IMR-90 (cell line): ENCODE measurements at regions of chr2 and their contacts with region 1.

Region 1: GRCh38 chr2:219388127-219388844 is 574 bp upstream of the DNPEP start:
- DNase-seq: peak; percentile 95
- ATAC-seq: peak; percentile 84
- H3K4me3 ChIP-seq: peak overlapping the region; percentile 26
- H3K27ac ChIP-seq: peak overlapping the region; percentile 68
- H3K4me1 ChIP-seq: peaks cover 23% of the 10 kb centered on the region
- H3K27me3 ChIP-seq: 0 out of 2 replicates have a peak, but pooled peaks cover 2% of the 10 kb centered on the region
- CTCF ChIP-seq: peak; percentile 72
- POLR2A ChIP-seq: no peak
- RAD21 ChIP-seq: peak; percentile 30; the same call in 1 of the 2 replicates

Region 2: DNA sequence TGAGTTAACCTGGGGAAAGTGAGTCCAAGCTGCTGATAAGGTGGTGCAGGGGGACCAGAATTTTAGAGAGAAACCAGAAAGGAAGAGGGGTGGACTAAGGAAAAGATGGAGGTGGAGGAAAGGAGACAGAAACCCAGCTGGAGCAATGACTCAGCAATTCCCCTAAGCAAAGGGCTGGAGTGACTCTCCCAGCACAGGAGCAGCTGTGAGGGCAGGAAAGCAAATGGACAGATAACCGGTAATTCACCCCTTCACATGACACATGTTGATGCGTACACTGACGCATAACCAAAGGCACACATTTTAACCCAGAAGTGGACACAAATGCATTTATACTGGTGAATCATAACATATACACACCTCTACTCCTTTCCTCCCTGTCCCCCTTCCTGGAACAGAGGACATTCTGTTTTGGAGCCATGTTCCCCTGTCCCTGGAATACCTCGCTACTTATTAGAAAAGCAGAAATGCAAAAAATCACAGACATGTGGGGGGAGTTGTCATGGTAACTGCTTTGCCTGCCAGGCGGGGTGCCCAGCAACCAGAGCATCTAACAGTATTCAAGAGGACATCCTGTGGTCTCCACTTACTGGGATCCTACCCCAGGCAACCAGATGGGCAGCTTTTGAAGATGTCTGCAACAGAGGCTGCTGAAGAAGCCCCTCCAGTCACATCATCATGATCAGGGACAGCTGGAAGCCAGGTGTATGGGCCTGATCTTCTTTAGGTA is 424.1 kb before region 1 on chr2:
- CTCF ChIA-PET with region 1: no interaction called
- POLR2A ChIA-PET with region 1: no interaction called
- dilution Hi-C with region 1: no loop called
- in situ Hi-C with region 1: no loop called
- intact Hi-C with region 1: no loop called
- DNase-seq: peak; percentile 92
- ATAC-seq: peak; percentile 18; the same call in 1 of the 2 replicates
- H3K4me3 ChIP-seq: no peak overlapping the region
- H3K27ac ChIP-seq: no peak overlapping the region
- H3K4me1 ChIP-seq: no peaks in the 10 kb centered on the region
- H3K27me3 ChIP-seq: peaks cover 41% of the 10 kb centered on the region
- CTCF ChIP-seq: no peak
- POLR2A ChIP-seq: no peak
- RAD21 ChIP-seq: no peak

Region 3: DNA sequence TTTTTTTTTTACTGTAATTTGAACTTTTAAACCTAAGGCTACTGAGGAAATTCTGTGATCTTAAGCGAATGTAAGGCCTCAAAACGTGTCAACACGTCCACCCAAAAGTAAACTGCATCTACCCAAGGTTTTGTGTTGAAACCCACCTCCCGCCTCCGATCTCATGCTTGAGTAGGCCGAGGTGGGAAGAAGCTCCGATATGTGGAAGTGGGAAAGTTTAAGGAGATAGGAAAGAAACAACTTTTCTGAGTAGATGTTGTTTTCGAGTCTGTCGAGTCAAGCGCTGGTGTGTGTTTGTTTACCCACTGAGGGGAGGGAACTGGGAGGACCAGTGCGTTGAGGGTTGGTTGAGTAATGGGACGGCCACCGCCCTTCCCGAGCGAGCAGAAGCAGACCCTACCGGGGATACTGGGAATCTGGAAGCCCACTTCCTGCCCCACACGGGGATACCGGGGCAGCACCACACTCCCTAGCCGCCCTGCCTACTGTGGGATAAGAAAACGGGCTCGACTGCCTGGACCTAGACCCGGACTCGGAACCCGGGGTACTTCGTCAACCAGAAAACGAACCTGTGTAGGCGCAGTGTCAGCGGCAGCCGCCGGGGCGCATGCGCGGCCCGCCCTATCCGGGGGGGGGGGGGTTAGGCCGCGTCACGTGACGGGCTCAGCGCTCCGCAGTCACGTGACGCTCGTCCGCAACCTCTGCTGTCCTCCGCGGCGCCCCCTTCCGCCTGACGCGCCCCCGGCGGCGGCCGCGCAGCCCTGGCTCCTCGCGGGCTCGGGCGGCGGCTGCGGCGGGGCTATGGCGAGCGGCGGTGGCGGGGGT is 210.5 kb before region 1 on chr2 and contains the start of gene RETREG2:
- CTCF ChIA-PET with region 1: no interaction called
- POLR2A ChIA-PET with region 1: no interaction called
- dilution Hi-C with region 1: no loop called
- in situ Hi-C with region 1: no loop called
- intact Hi-C with region 1: loop called (anchors 5 kb)
- DNase-seq: peak; percentile 89
- ATAC-seq: peak; percentile 73
- H3K4me3 ChIP-seq: peak within 1 kb of the TSS; percentile 64
- H3K27ac ChIP-seq: peak within 1 kb of the TSS; percentile 96
- H3K4me1 ChIP-seq: 0 out of 2 replicates have a peak, but pooled peaks cover 6% of the 10 kb centered on the region
- H3K27me3 ChIP-seq: no peaks in the 10 kb centered on the region
- CTCF ChIP-seq: peak; percentile 56
- POLR2A ChIP-seq: peak; percentile 89
- RAD21 ChIP-seq: 0 out of 2 replicates have a peak, but pooled peaks have one; percentile 4
- total RNA-seq, gene RETREG2: 39.2 and 51.1 TPM in 2 replicates

Region 4: DNA sequence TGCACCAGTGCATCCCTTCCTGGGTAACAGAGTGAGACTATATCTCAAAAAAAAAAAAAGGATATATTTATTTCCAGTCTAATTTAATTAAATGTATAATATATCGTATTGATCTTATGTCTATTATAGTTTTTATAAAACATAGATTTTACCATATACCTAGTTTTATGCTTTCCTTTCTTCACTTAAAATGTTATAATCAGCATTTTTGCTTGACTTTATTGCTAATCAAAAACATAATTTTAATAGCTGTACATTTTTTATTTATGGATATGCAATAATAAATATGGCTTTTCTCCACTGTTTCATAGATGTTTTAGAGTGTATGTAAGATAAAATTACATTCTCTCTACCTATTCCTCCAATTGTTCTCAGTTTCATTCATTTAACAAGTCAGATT is 1225.8 kb after region 1 on chr2:
- CTCF ChIA-PET with region 1: no interaction called
- POLR2A ChIA-PET with region 1: no interaction called
- dilution Hi-C with region 1: no loop called
- in situ Hi-C with region 1: no loop called
- intact Hi-C with region 1: no loop called
- DNase-seq: no peak
- ATAC-seq: no peak
- H3K4me3 ChIP-seq: no peak overlapping the region
- H3K27ac ChIP-seq: no peak overlapping the region
- H3K4me1 ChIP-seq: peaks cover 2% of the 10 kb centered on the region; the same call in 1 of the 2 replicates
- H3K27me3 ChIP-seq: no peaks in the 10 kb centered on the region; the same call in 1 of the 2 replicates
- CTCF ChIP-seq: no peak
- POLR2A ChIP-seq: no peak
- RAD21 ChIP-seq: no peak

Region 5: DNA sequence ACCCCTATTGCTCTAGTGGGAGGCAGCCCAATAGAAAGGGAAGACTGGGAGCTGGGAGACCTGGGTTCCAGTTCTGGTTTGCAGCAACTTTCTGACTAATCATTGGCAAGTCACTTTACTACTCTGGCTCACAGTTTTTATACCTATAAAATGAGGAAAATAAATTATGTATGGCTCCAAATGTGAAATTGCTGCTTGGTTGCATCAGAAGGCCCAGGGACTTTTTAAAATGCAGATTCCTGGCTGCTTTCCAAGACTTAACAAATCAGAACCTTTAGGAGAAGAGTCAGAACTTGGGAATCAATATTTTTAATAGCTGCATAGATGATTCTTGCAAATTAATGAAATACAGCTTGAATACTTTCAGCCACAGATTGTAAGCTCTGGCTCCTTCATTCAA is 1240.0 kb after region 1 on chr2:
- CTCF ChIA-PET with region 1: no interaction called
- POLR2A ChIA-PET with region 1: interaction called, 16 read pairs
- dilution Hi-C with region 1: no loop called
- in situ Hi-C with region 1: no loop called
- intact Hi-C with region 1: no loop called
- DNase-seq: no peak
- ATAC-seq: no peak
- H3K4me3 ChIP-seq: no peak overlapping the region
- H3K27ac ChIP-seq: no peak overlapping the region
- H3K4me1 ChIP-seq: peaks cover 2% of the 10 kb centered on the region; the same call in 1 of the 2 replicates
- H3K27me3 ChIP-seq: no peaks in the 10 kb centered on the region
- CTCF ChIP-seq: no peak
- POLR2A ChIP-seq: no peak
- RAD21 ChIP-seq: no peak